PC-9 (cell line): ENCODE measurements at regions of chr5 and their contacts with region 1.

Region 1: DNA sequence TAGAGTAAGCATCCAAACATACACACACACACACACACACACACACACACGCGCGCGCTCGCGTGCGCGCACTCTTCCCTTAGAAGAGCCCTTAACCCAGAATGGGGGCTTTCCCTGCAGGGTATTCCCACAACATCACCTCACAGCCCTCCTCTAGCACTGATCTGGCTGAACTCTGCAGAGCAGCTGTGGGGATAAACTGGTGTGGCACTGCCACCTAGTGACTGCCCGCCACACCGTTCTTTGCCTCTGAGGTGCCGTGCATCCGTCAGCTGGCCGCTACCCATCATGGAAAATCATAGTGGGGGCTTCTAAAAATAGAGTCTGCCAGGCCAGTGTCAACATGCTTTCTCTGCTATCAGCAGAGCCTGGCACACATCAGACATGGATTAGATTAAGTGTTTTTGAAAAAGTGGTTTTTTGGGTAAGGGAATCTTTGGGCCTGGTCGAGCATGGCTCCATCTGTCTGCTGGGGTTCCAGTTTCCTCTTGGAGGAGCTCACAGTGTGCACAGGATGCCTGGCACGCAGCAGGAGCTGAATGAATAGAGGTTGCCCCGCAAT is 88.1 kb downstream of the KCNN2 start:
- DNase-seq: peak; percentile 34 to 38
- H3K4me3 ChIP-seq: no peak overlapping the region
- H3K27ac ChIP-seq: no peak overlapping the region
- H3K4me1 ChIP-seq: no peaks in the 10 kb centered on the region
- H3K27me3 ChIP-seq: peaks cover 22% of the 10 kb centered on the region; the same call in 1 of the 2 replicates
- CTCF ChIP-seq: peak; percentile 76

Region 2: DNA sequence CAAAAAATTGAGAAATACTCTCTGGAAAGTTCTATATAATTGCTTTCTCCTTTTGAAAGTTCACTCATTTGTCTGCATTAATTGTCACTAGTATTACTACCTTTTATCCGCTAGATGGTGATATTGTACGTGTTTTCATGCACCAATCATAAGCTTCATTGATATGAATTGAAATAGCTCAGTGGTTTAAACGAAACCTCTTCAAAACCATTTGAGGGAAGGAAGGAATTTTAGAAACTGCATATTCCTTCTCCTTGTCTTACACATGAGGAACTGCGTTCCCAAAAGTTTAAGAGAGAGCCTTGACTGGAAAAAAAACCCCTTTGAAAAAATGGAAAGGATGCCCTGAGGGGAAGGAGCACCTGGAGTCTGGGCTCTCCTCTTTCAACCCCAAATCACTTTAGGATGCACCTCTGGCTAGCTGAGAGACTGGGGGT is 837.9 kb before region 1 on chr5:
- CTCF ChIA-PET with region 1: interaction called, 4 read pairs
- POLR2A ChIA-PET with region 1: no interaction called
- intact Hi-C with region 1: loop called (anchors 5 kb)
- DNase-seq: no peak
- H3K4me3 ChIP-seq: no peak overlapping the region
- H3K27ac ChIP-seq: no peak overlapping the region
- H3K4me1 ChIP-seq: no peaks in the 10 kb centered on the region
- H3K27me3 ChIP-seq: peaks cover 11% of the 10 kb centered on the region; the same call in 1 of the 2 replicates
- CTCF ChIP-seq: peak; percentile 75

Region 3: GRCh38 chr5:113678924-113679575 is 770.9 kb before region 1 on chr5:
- CTCF ChIA-PET with region 1: no interaction called
- POLR2A ChIA-PET with region 1: no interaction called
- intact Hi-C with region 1: loop called (anchors 2 kb)
- DNase-seq: peak in 1 of 2 experiments; percentile 15
- H3K4me3 ChIP-seq: no peak overlapping the region
- H3K27ac ChIP-seq: no peak overlapping the region
- H3K4me1 ChIP-seq: no peaks in the 10 kb centered on the region
- H3K27me3 ChIP-seq: no peaks in the 10 kb centered on the region
- CTCF ChIP-seq: peak; percentile 77

Region 4: GRCh38 chr5:114101153-114101552 is 348.8 kb before region 1 on chr5:
- CTCF ChIA-PET with region 1: no interaction called
- POLR2A ChIA-PET with region 1: no interaction called
- intact Hi-C with region 1: loop called (anchors 2 kb)
- DNase-seq: peak in 1 of 2 experiments; percentile 35
- H3K4me3 ChIP-seq: no peak overlapping the region
- H3K27ac ChIP-seq: no peak overlapping the region
- H3K4me1 ChIP-seq: no peaks in the 10 kb centered on the region
- H3K27me3 ChIP-seq: no peaks in the 10 kb centered on the region
- CTCF ChIP-seq: peak; percentile 67